ENCODE measurements at regions of chr20 and their contacts with region 1.

Region 1: GRCh38 chr20:21505161-21505809 is 8.6 kb downstream of the NKX2-2 start:
- DNase-seq: peak; percentile 63 to 87 (median 76)
- ATAC-seq: peak; percentile 75
- H3K4me3 ChIP-seq: peak overlapping the region; percentile 48
- H3K4me3 Mint-ChIP-seq: peak overlapping the region; percentile 82
- H3K27ac ChIP-seq: no peak overlapping the region
- H3K27ac Mint-ChIP-seq: no peak overlapping the region
- H3K4me1 ChIP-seq: peaks cover 31% of the 10 kb centered on the region
- H3K4me1 Mint-ChIP-seq: peaks cover 39% of the 10 kb centered on the region
- H3K27me3 ChIP-seq: peaks cover 54 to 62% of the 10 kb centered on the region in 2 experiments
- H3K27me3 Mint-ChIP-seq: peaks cover 80% of the 10 kb centered on the region
- CTCF ChIP-seq: peak; percentile 94

Region 2: DNA sequence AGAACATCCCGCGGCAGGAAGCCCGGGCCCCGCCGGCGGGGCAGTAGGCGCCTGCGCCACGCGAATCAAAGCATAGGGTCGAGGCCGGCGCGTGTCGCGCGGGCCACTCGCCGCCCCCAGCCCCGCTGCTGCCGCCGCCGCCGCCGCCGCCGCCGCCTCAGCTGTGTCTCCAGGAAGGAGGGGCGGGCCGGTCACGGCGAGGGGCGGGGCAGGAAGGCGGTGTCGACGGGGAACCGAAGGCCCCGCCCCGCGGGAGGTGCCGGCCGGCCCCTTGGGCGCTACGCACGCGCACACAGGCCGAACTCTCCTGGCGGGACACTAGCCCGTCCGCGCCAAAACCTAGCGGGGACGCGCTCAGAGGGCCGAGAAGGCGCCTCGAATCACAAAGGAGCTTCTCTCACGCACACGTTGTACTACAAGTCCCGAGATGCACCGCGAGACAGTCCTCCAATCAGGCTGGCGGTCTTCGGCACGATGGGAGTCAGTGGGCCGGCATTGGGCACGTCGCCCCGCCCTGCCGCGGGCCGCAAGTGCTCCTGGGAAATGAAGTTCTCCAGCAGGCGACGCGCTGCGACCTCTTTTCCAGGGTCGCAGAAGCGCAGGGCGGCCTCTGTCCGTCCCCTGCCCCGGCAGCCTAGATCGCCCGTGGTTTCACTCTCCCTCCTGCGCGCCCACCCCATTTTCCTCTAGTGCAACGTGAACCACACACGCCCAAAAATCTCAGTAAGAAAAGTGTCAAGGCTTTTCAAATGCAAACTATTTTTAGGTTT is 792.6 kb before region 1 on chr20 and contains the start of gene RALGAPA2:
- CTCF ChIA-PET with region 1: no interaction called
- POLR2A ChIA-PET with region 1: no interaction called
- intact Hi-C with region 1: loop called in 1 of 2 experiments (anchors 10 kb)
- DNase-seq: peak; percentile 89 to 97 (median 94)
- ATAC-seq: peak; percentile 93
- H3K4me3 ChIP-seq: peak within 1 kb of the TSS; percentile 82
- H3K4me3 Mint-ChIP-seq: peak within 1 kb of the TSS; percentile 98
- H3K27ac ChIP-seq: peak within 1 kb of the TSS; percentile 79 to 95
- H3K27ac Mint-ChIP-seq: peak within 1 kb of the TSS; percentile 92
- H3K4me1 ChIP-seq: peaks cover 15% of the 10 kb centered on the region
- H3K4me1 Mint-ChIP-seq: peaks cover 40% of the 10 kb centered on the region
- H3K27me3 ChIP-seq: no peaks in the 10 kb centered on the region
- H3K27me3 Mint-ChIP-seq: peaks cover 5% of the 10 kb centered on the region
- CTCF ChIP-seq: no peak
- total RNA-seq, gene RALGAPA2: 21.2 to 21.9 TPM

Region 3: GRCh38 chr20:21048841-21049273 is 456.4 kb before region 1 on chr20:
- CTCF ChIA-PET with region 1: interaction called, 3 read pairs
- POLR2A ChIA-PET with region 1: no interaction called
- intact Hi-C with region 1: loop called (anchors 1 to 2 kb)
- DNase-seq: peak; percentile 9 to 69 (median 32)
- ATAC-seq: peak; percentile 43
- H3K4me3 ChIP-seq: no peak overlapping the region
- H3K4me3 Mint-ChIP-seq: no peak overlapping the region
- H3K27ac ChIP-seq: no peak overlapping the region
- H3K27ac Mint-ChIP-seq: no peak overlapping the region
- H3K4me1 ChIP-seq: no peaks in the 10 kb centered on the region
- H3K4me1 Mint-ChIP-seq: no peaks in the 10 kb centered on the region
- H3K27me3 ChIP-seq: peaks cover 7 to 10% of the 10 kb centered on the region in 2 experiments
- H3K27me3 Mint-ChIP-seq: peaks cover 58% of the 10 kb centered on the region
- CTCF ChIP-seq: peak; percentile 64

Region 4: GRCh38 chr20:21105429-21106170 is 399.7 kb before region 1 on chr20:
- CTCF ChIA-PET with region 1: no interaction called
- POLR2A ChIA-PET with region 1: no interaction called
- intact Hi-C with region 1: loop called (anchors 5 kb)
- DNase-seq: peak in 3 of 14 experiments; percentile 2 to 38 (median 24)
- ATAC-seq: no peak
- H3K4me3 ChIP-seq: no peak overlapping the region
- H3K4me3 Mint-ChIP-seq: no peak overlapping the region
- H3K27ac ChIP-seq: no peak overlapping the region
- H3K27ac Mint-ChIP-seq: no peak overlapping the region
- H3K4me1 ChIP-seq: peaks cover 50% of the 10 kb centered on the region
- H3K4me1 Mint-ChIP-seq: peaks cover 34% of the 10 kb centered on the region
- H3K27me3 ChIP-seq: peaks cover 74 to 86% of the 10 kb centered on the region in 2 experiments
- H3K27me3 Mint-ChIP-seq: peaks cover 92% of the 10 kb centered on the region
- CTCF ChIP-seq: no peak

Region 5: DNA sequence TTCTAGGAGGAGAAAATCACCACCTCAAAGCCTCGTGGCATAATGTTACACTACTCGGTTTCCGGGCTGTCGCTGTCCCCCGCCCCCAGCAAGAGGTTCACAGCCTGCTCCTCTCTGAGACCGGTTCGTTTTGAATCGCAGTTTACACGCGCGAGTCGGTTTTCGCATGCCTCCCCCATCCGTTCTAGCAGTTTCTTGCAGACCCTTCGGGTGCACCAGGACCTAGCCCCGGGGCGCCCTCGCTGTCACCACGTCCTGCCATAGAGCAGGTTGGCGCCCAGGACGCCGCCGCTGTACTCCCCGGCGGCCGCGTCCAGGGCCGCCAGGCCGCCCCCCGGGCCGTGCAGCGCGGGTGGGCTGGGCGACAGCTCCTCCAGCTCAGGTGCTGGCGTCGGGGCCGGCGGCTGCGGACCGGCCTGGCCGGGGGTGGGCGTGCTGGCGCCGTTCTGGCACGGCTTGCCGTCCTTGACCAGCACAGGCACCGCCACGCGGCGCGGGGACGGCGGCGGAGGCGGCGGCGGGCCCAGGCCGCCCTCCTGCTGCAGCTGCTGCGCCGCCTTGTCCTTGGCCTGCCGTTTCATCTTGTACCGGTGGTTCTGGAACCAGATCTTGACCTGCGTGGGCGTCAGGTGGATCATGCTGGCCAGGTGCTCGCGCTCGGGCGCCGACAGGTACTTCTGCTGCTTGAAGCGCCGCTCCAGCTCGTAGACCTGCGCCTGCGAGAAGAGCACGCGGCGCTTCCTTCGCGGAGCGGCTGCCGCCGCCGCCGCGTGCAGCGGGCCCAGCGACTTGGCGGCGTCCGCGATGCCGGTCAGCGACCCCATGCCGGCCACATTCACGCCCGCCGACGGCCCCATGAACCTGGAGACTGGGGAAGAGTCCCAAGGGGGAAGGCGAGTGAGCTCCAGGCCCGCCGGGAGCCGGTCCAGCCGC is 109.4 kb before region 1 on chr20:
- CTCF ChIA-PET with region 1: interaction called, 10 read pairs
- POLR2A ChIA-PET with region 1: no interaction called
- intact Hi-C with region 1: loop called in 1 of 2 experiments (anchors 5 kb)
- DNase-seq: peak in 12 of 14 experiments; percentile 12 to 83 (median 46)
- ATAC-seq: peak; percentile 89
- H3K4me3 ChIP-seq: no peak overlapping the region
- H3K4me3 Mint-ChIP-seq: peak overlapping the region; percentile 74
- H3K27ac ChIP-seq: no peak overlapping the region
- H3K27ac Mint-ChIP-seq: peak overlapping the region; percentile 35
- H3K4me1 ChIP-seq: peaks cover 16% of the 10 kb centered on the region
- H3K4me1 Mint-ChIP-seq: peaks cover 27% of the 10 kb centered on the region
- H3K27me3 ChIP-seq: peaks cover 34 to 85% of the 10 kb centered on the region in 2 experiments
- H3K27me3 Mint-ChIP-seq: peaks cover 81% of the 10 kb centered on the region
- CTCF ChIP-seq: no peak